ENCODE measurements at regions of chr12 and their contacts with region 1.

Region 1: DNA sequence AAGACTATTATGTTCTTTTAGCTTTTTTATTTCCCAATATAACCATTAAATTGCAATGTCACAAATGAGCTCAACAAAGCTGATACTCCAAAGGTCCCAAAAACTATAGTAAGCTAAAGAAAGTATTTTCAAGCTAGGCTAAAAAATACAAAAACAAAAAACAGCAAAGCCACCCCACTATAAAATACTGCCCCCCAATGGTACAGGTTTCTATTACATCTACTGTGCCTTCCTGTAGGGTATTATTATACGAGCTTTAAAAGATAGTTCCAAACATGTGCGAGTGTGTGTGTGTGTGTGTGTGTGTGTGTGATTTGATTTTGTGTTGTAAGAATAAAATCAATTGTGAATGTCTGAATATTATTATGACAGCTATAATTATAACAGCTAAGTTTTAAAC is 1.1 kb downstream of the IFNG start:
- DNase-seq: no peak
- H3K4me3 Mint-ChIP-seq: peak overlapping the region; percentile 74
- H3K27ac Mint-ChIP-seq: peak overlapping the region; percentile 83
- H3K4me1 Mint-ChIP-seq: peaks cover 45% of the 10 kb centered on the region
- H3K27me3 Mint-ChIP-seq: no peaks in the 10 kb centered on the region

Region 2: GRCh38 chr12:67400742-67401141 is 757.7 kb before region 1 on chr12:
- CTCF ChIA-PET with region 1: no interaction called
- POLR2A ChIA-PET with region 1: no interaction called
- intact Hi-C with region 1: no loop called
- DNase-seq: no peak
- H3K4me3 Mint-ChIP-seq: no peak overlapping the region
- H3K27ac Mint-ChIP-seq: no peak overlapping the region
- H3K4me1 Mint-ChIP-seq: no peaks in the 10 kb centered on the region
- H3K27me3 Mint-ChIP-seq: peaks cover 2% of the 10 kb centered on the region

Region 3: DNA sequence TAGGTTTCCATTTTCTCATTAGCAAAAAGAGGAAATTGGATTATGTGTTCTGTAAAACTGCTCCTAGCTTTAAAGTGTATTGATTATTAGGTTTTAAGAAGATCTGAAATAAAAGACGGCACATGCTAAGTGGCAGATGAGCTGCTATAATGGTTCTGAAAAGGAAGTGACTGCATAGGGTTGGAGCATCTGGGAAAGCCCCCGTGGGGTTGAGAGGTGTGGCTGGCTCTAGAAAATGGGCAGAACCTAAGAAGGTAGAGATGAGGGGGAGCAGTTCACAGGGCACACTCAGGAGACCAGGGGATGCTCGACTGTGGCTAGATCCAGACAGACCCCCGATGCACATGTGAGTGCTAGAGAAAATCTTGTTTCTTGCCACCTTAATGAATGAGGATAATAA is 167.3 kb before region 1 on chr12:
- CTCF ChIA-PET with region 1: interaction called, 16 read pairs
- POLR2A ChIA-PET with region 1: interaction called, 4 read pairs
- intact Hi-C with region 1: no loop called
- DNase-seq: peak; percentile 71
- H3K4me3 Mint-ChIP-seq: peak overlapping the region; percentile 65
- H3K27ac Mint-ChIP-seq: peak overlapping the region; percentile 55
- H3K4me1 Mint-ChIP-seq: peaks cover 40% of the 10 kb centered on the region
- H3K27me3 Mint-ChIP-seq: no peaks in the 10 kb centered on the region

Region 4: DNA sequence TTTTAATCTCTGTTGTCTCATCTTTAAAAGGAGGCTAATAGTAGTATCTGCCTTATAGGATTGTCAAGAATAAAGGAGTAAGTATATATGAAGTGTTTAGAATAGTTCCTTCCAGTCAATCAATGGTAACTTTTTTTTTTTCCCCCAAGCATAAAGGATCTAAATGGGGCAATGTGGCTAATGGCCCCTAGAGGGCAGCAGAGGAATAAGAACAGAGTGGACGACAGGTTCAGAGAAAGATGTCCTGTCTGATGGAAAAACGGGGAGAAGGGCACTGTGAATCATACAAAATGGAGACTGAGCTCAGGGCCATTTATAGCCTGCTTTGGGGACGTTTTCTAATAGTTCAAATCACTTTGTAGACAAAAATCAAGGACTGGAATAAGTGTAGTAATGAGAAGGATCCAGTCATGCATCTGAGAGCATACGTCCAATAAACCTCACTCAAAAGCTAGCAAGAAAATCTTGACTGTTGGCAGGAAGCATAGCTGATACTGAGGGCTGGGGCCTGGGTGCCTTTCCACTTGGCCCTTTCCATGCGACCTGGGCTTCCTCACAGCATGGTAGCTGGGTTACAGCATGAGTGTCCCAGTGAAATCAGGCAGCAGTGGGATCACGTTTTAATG is 117.9 kb before region 1 on chr12:
- CTCF ChIA-PET with region 1: interaction called, 154 read pairs
- POLR2A ChIA-PET with region 1: interaction called, 8 read pairs
- intact Hi-C with region 1: loop called (anchors 1 kb)
- DNase-seq: peak; percentile 71
- H3K4me3 Mint-ChIP-seq: no peak overlapping the region
- H3K27ac Mint-ChIP-seq: peak overlapping the region; percentile 66
- H3K4me1 Mint-ChIP-seq: peaks cover 51% of the 10 kb centered on the region
- H3K27me3 Mint-ChIP-seq: no peaks in the 10 kb centered on the region

Region 5: GRCh38 chr12:68113644-68114043 is 44.8 kb before region 1 on chr12:
- CTCF ChIA-PET with region 1: interaction called, 189 read pairs
- POLR2A ChIA-PET with region 1: interaction called, 58 read pairs
- intact Hi-C with region 1: loop called (anchors 1 kb)
- DNase-seq: peak; percentile 74
- H3K4me3 Mint-ChIP-seq: no peak overlapping the region
- H3K27ac Mint-ChIP-seq: no peak overlapping the region
- H3K4me1 Mint-ChIP-seq: peaks cover 41% of the 10 kb centered on the region
- H3K27me3 Mint-ChIP-seq: peaks cover 3% of the 10 kb centered on the region

Region 6: GRCh38 chr12:68169213-68169889 is 10.9 kb after region 1 on chr12:
- CTCF ChIA-PET with region 1: interaction called, 12 read pairs
- POLR2A ChIA-PET with region 1: interaction called, 3 read pairs
- intact Hi-C with region 1: no loop called
- DNase-seq: no peak
- H3K4me3 Mint-ChIP-seq: no peak overlapping the region
- H3K27ac Mint-ChIP-seq: no peak overlapping the region
- H3K4me1 Mint-ChIP-seq: peaks cover 23% of the 10 kb centered on the region
- H3K27me3 Mint-ChIP-seq: no peaks in the 10 kb centered on the region

Region 7: DNA sequence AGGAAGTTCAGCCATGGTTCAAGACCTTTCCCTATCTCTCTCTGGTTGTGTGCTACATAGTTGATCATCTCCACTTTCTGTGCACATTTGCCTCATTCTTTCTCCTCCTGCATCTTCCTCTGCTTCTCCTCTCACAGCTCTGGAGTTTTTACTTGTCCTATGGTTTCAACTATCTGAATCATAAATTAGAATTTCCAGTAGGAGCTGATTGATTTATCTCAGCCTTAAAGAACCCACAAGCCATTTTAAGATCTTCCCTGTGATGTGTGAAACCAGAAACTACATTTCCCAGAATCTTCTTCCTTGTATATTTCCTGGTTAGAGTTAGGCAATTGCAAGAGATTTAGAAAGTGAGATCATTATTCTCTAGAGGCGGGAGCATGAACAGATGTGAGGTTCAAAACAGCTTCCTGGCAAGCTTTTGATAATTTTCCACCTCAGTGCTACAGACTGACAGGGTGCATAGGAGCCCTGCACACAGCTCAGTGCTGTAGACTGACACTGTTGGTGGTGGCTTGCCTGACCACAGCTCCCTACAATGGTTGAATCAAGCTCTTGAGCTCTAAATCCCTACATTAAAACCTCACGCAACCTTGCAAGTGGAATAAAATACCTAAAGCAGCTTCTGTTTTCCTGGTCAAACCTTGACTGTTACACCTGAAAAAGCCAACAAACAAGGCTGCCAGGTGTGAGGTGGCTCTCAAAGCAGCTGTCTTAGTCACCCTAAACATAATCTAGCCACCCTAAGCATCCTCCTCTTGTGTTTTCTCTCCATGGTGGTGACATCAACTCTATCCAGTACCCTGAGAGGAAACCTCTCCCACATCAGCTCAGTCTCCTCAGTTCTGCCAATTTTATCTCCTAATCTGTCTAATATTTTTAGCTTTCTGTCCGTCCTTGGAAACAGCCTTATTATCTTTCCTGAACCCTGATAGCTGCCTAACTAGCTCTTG is 22.6 kb after region 1 on chr12:
- CTCF ChIA-PET with region 1: interaction called, 25 read pairs
- POLR2A ChIA-PET with region 1: interaction called, 5 read pairs
- intact Hi-C with region 1: loop called (anchors 2 kb)
- DNase-seq: peak; percentile 63
- H3K4me3 Mint-ChIP-seq: no peak overlapping the region
- H3K27ac Mint-ChIP-seq: peak overlapping the region; percentile 78
- H3K4me1 Mint-ChIP-seq: peaks cover 54% of the 10 kb centered on the region
- H3K27me3 Mint-ChIP-seq: no peaks in the 10 kb centered on the region

Region 8: GRCh38 chr12:68223083-68223747 is 64.8 kb after region 1 on chr12:
- CTCF ChIA-PET with region 1: interaction called, 10 read pairs
- POLR2A ChIA-PET with region 1: no interaction called
- intact Hi-C with region 1: no loop called
- DNase-seq: peak; percentile 83
- H3K4me3 Mint-ChIP-seq: no peak overlapping the region
- H3K27ac Mint-ChIP-seq: no peak overlapping the region
- H3K4me1 Mint-ChIP-seq: peaks cover 17% of the 10 kb centered on the region
- H3K27me3 Mint-ChIP-seq: peaks cover 7% of the 10 kb centered on the region